BJ (cell line): ENCODE measurements at regions of chr11 and their contacts with region 1.

Region 1: GRCh38 chr11:2036863-2037486 is 39.3 kb upstream of the H19 start:
- DNase-seq: no peak
- H3K4me3 ChIP-seq: no peak overlapping the region
- H3K27me3 ChIP-seq: no peaks in the 10 kb centered on the region
- CTCF ChIP-seq: no peak

Region 2: GRCh38 chr11:1226986-1227545 is 809.9 kb before region 1 on chr11:
- CTCF ChIA-PET with region 1: no interaction called
- POLR2A ChIA-PET with region 1: no interaction called
- DNase-seq: no peak
- H3K4me3 ChIP-seq: no peak overlapping the region
- H3K27me3 ChIP-seq: 0 out of 2 replicates have a peak, but pooled peaks cover 2% of the 10 kb centered on the region
- CTCF ChIP-seq: peak; percentile 33; the same call in 1 of the 2 replicates

Region 3: DNA sequence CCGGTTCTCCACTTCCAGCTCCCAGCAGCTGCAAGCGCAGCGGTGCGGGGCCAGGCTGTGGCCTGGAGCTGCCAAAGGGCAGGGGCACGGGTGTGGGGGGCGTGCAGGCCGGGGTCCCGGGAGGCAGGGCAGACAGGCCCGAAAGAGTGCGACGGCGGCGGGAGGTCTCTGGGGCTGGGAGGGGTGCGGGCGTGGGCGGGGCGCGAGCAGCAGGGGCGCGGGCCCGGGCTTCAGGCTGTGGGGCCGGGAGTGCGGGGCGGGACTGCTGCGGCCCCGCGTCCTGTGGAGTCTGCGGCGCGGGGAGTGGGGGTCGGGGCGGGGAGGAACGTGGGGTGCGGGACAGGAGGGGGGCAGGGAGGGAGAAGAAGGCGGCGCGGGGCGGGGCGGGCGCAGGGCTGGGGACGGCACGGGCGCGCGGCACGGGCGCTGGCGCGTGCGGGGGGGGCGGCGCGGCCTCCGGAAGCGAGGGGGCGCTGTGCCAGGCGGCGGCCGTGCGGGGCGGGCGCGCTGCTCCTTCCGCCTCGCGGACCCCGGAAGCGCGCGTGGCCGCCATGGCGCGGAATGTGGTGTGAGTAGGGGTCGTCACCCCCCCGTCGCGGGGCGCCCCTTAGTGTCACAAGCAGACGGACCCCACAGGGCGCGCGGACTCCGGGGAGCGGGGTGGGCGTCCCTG is 90.0 kb before region 1 on chr11 and contains the start of gene MRPL23:
- CTCF ChIA-PET with region 1: interaction called, 20 read pairs
- POLR2A ChIA-PET with region 1: no interaction called
- DNase-seq: no peak
- H3K4me3 ChIP-seq: no peak within 1 kb of the TSS
- H3K27me3 ChIP-seq: no peaks in the 10 kb centered on the region
- CTCF ChIP-seq: no peak
- polyA plus RNA-seq, gene MRPL23: 39.8 and 43.5 TPM in 2 replicates